HCT116 (cell line): ENCODE measurements at regions of chrX and their contacts with region 1.

Region 1: DNA sequence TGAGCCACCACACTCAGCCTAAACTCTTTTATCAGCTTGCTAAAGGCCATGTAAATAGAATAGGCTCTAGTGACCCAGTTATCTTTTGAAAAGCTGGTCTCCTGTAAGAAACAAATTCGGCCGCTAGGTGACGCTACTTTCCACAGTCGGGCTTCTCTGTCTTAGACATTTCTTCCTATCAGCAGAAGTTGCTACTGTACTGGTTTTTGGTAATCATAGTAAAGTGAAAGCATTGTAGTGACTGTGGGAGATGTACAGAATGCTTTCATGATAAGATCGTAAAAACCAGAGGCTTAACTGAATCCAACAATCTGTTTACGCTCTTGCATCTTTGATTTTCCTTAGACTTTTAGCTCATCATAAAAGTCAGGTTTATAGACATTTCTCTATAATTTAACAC is 82.6 kb downstream of the GK start:
- DNase-seq: peak; percentile 39
- ATAC-seq: peak; percentile 78
- H3K4me3 ChIP-seq: no peak overlapping the region
- H3K27ac ChIP-seq: no peak overlapping the region
- H3K4me1 ChIP-seq: no peaks in the 10 kb centered on the region
- H3K27me3 ChIP-seq: no peaks in the 10 kb centered on the region
- CTCF ChIP-seq: peak; percentile 46 to 74 (median 62); a peak in 5 of 6 replicates
- POLR2A ChIP-seq: no peak
- RAD21 ChIP-seq: peak; percentile 69

Region 2: GRCh38 chrX:30822068-30822681 is 86.3 kb after region 1 on chrX:
- CTCF ChIA-PET with region 1: interaction called, 7 read pairs
- POLR2A ChIA-PET with region 1: no interaction called
- RAD21 ChIA-PET with region 1: no interaction called
- intact Hi-C with region 1: loop called (anchors 10 kb)
- DNase-seq: no peak
- ATAC-seq: peak; percentile 58; the same call in 1 of the 2 replicates
- H3K4me3 ChIP-seq: no peak overlapping the region
- H3K27ac ChIP-seq: no peak overlapping the region
- H3K4me1 ChIP-seq: no peaks in the 10 kb centered on the region
- H3K27me3 ChIP-seq: no peaks in the 10 kb centered on the region
- CTCF ChIP-seq: peak in 2 of 3 experiments; percentile 21 to 32; a peak in 1 of 6 replicates
- POLR2A ChIP-seq: no peak
- RAD21 ChIP-seq: peak; percentile 34; the same call in 1 of the 2 replicates

Region 3: DNA sequence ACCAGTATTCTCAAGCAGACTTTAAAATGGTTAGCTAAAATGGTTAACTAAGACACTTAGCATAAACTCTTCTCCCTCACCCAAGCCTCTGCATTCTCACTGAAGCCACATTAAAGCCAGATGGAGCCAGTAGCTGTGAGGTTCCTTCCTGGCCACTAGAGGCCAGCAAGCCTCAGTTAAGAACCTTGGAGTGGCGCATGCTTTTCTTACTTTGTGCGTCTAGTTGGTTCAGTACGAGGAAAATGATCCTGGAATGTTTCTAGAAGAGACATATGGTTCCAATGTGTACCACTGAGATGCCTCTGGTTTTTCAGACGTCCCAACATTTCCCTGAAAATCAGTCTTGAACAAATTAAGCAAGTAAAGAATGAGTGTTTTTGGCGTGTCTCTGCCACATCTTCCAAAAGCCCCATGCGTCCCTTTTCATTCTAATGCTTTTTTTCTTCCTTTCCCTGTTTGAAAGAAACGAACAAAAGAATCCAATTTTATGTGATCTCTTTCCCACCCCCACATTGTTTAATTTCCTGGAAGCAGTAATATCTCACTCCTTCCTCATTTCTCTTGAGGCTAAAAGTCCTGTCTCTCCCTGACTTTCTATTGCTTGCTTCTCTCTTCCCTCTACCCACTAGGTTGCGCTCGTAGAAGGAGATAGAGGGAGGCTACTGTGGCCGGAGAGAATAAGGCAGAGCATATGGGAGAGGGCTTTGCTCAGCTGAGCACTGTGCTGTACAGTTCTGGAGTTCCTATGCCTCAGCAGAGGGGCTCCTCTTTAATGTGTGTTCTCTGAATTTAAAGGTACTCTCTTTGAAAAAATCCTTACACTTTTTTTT is 236.2 kb after region 1 on chrX:
- CTCF ChIA-PET with region 1: no interaction called
- POLR2A ChIA-PET with region 1: no interaction called
- RAD21 ChIA-PET with region 1: no interaction called
- intact Hi-C with region 1: loop called (anchors 5 kb)
- DNase-seq: no peak
- ATAC-seq: peak; percentile 95
- H3K4me3 ChIP-seq: no peak overlapping the region
- H3K27ac ChIP-seq: no peak overlapping the region
- H3K4me1 ChIP-seq: peaks cover 0 to 7% of the 10 kb centered on the region in 2 experiments; a peak in 1 of 4 replicates
- H3K27me3 ChIP-seq: no peaks in the 10 kb centered on the region
- CTCF ChIP-seq: peak; percentile 35 to 70 (median 64); a peak in 5 of 6 replicates
- POLR2A ChIP-seq: no peak
- RAD21 ChIP-seq: peak; percentile 26; the same call in 1 of the 2 replicates

Region 4: GRCh38 chrX:31245714-31246113 is 509.9 kb after region 1 on chrX:
- CTCF ChIA-PET with region 1: no interaction called
- POLR2A ChIA-PET with region 1: no interaction called
- RAD21 ChIA-PET with region 1: no interaction called
- intact Hi-C with region 1: no loop called
- DNase-seq: no peak
- ATAC-seq: no peak
- H3K4me3 ChIP-seq: no peak overlapping the region
- H3K27ac ChIP-seq: no peak overlapping the region
- H3K4me1 ChIP-seq: no peaks in the 10 kb centered on the region
- H3K27me3 ChIP-seq: no peaks in the 10 kb centered on the region
- CTCF ChIP-seq: no peak
- POLR2A ChIP-seq: no peak
- RAD21 ChIP-seq: no peak

Region 5: GRCh38 chrX:31658360-31658759 is 922.5 kb after region 1 on chrX:
- CTCF ChIA-PET with region 1: no interaction called
- POLR2A ChIA-PET with region 1: no interaction called
- RAD21 ChIA-PET with region 1: no interaction called
- intact Hi-C with region 1: loop called (anchors 5 kb)
- DNase-seq: no peak
- ATAC-seq: no peak
- H3K4me3 ChIP-seq: no peak overlapping the region
- H3K27ac ChIP-seq: no peak overlapping the region
- H3K4me1 ChIP-seq: no peaks in the 10 kb centered on the region
- H3K27me3 ChIP-seq: no peaks in the 10 kb centered on the region
- CTCF ChIP-seq: peak in 2 of 3 experiments; percentile 8 to 35; a peak in 1 of 6 replicates
- POLR2A ChIP-seq: no peak
- RAD21 ChIP-seq: peak; percentile 28